ENCODE measurements at regions of chr17 and their contacts with region 1.

Region 1: GRCh38 chr17:44344939-44345453 is at the start of gene GRN:
- DNase-seq: peak; percentile 76
- ATAC-seq: peak; percentile 70
- H3K4me3 Mint-ChIP-seq: peak within 1 kb of the TSS; percentile 97
- H3K27ac Mint-ChIP-seq: peak within 1 kb of the TSS; percentile 89
- H3K4me1 Mint-ChIP-seq: peaks cover 58% of the 10 kb centered on the region
- H3K27me3 Mint-ChIP-seq: no peaks in the 10 kb centered on the region
- CTCF ChIP-seq: no peak
- total RNA-seq, gene GRN: 229 and 250 TPM in 2 replicates

Region 2: GRCh38 chr17:44123356-44124117 is 221.5 kb before region 1 on chr17 and contains the start of gene HDAC5:
- CTCF ChIA-PET with region 1: interaction called, 3 read pairs
- POLR2A ChIA-PET with region 1: interaction called, 6 read pairs
- intact Hi-C with region 1: loop called (anchors 5 kb)
- DNase-seq: peak; percentile 95
- ATAC-seq: peak; percentile 96
- H3K4me3 Mint-ChIP-seq: peak within 1 kb of the TSS; percentile 95
- H3K27ac Mint-ChIP-seq: peak within 1 kb of the TSS; percentile 97
- H3K4me1 Mint-ChIP-seq: peaks cover 49% of the 10 kb centered on the region
- H3K27me3 Mint-ChIP-seq: no peaks in the 10 kb centered on the region
- CTCF ChIP-seq: no peak
- total RNA-seq, gene HDAC5: 28.4 and 35.1 TPM in 2 replicates

Region 3: DNA sequence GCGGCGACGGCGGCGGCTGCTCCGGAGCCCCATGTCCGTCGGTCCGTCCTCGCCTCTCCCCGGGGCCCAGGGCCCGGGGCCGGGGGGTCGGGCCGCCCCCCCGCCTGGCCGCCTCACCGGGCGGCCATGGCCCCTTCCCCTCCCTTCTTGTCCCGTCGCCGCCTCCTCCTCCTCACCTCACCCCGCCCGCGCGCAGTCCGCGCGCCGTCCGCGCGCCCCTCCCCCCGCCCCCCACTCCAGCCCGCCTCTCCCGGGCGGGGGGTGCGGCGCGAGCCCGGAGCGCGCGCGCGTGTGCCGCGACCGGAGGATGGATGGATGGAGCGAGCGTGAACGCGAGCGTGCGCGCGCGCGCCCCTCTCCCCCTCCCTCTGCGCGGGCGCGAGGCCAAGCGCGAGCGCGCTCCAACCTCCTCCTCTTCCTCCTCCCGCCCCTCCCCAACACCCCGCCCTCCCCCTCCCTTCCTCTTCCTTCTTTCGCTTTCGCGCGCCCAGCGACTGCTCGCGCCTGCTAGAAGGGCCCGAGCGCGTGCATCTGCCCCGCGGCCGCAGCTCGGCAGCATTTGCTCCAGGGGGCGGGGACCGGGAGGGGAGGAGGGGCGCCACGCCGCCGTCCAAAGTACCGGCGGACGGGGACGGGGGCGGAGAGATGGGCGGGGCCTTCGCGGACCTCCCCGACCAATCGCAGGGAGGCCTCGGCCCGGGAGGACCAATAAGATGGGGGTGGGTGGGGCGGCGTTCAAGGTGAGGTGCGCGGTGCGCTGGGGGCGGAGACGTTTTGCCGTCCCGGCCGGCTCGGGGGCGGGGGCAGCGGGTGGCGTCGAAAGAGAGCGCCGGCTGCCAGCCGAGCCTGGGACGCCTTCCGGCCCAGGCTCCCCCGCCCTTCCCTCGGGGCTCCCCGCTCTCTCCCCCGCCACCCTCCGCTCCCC is 145.2 kb before region 1 on chr17 and contains the start of gene ATXN7L3:
- CTCF ChIA-PET with region 1: interaction called, 9 read pairs
- POLR2A ChIA-PET with region 1: interaction called, 35 read pairs
- intact Hi-C with region 1: loop called (anchors 1 kb)
- DNase-seq: peak; percentile 95
- ATAC-seq: peak; percentile 85
- H3K4me3 Mint-ChIP-seq: peak within 1 kb of the TSS; percentile 91
- H3K27ac Mint-ChIP-seq: peak within 1 kb of the TSS; percentile 92
- H3K4me1 Mint-ChIP-seq: peaks cover 39% of the 10 kb centered on the region
- H3K27me3 Mint-ChIP-seq: no peaks in the 10 kb centered on the region
- CTCF ChIP-seq: no peak
- total RNA-seq, gene ATXN7L3: 92.0 and 103 TPM in 2 replicates

Region 4: GRCh38 chr17:44331249-44331760 is 13.7 kb before region 1 on chr17:
- CTCF ChIA-PET with region 1: interaction called, 38 read pairs
- POLR2A ChIA-PET with region 1: interaction called, 32 read pairs
- intact Hi-C with region 1: loop called (anchors 1 kb)
- DNase-seq: no peak
- ATAC-seq: peak; percentile 32
- H3K4me3 Mint-ChIP-seq: no peak overlapping the region
- H3K27ac Mint-ChIP-seq: no peak overlapping the region
- H3K4me1 Mint-ChIP-seq: peaks cover 34% of the 10 kb centered on the region
- H3K27me3 Mint-ChIP-seq: no peaks in the 10 kb centered on the region
- CTCF ChIP-seq: peak; percentile 88